ENCODE measurements at regions of chr7 and their contacts with region 1.

Region 1: GRCh38 chr7:66576646-66577045 is 52.0 kb upstream of the KCTD7 start:
- DNase-seq: no peak
- ATAC-seq: no peak
- H3K4me3 ChIP-seq: no peak overlapping the region
- H3K27ac ChIP-seq: no peak overlapping the region
- H3K4me1 ChIP-seq: peaks cover 4% of the 10 kb centered on the region
- H3K27me3 ChIP-seq: no peaks in the 10 kb centered on the region
- CTCF ChIP-seq: no peak
- POLR2A ChIP-seq: no peak
- RAD21 ChIP-seq: no peak

Region 2: GRCh38 chr7:66452165-66452564 is 124.5 kb before region 1 on chr7:
- CTCF ChIA-PET with region 1: no interaction called
- POLR2A ChIA-PET with region 1: no interaction called
- dilution Hi-C with region 1: no loop called
- in situ Hi-C with region 1: no loop called
- intact Hi-C with region 1: loop called (anchors 2 kb)
- DNase-seq: peak; percentile 30
- ATAC-seq: no peak
- H3K4me3 ChIP-seq: no peak overlapping the region
- H3K27ac ChIP-seq: no peak overlapping the region
- H3K4me1 ChIP-seq: peaks cover 4% of the 10 kb centered on the region; the same call in 1 of the 2 replicates
- H3K27me3 ChIP-seq: no peaks in the 10 kb centered on the region
- CTCF ChIP-seq: no peak
- POLR2A ChIP-seq: no peak
- RAD21 ChIP-seq: no peak

Region 3: GRCh38 chr7:66779669-66780409 is 203.2 kb after region 1 on chr7:
- CTCF ChIA-PET with region 1: no interaction called
- POLR2A ChIA-PET with region 1: no interaction called
- dilution Hi-C with region 1: no loop called
- in situ Hi-C with region 1: no loop called
- intact Hi-C with region 1: loop called (anchors 10 kb)
- DNase-seq: peak; percentile 56
- ATAC-seq: 0 out of 2 replicates have a peak, but pooled peaks have one; percentile 24
- H3K4me3 ChIP-seq: no peak overlapping the region
- H3K27ac ChIP-seq: peak overlapping the region; percentile 11; the same call in 1 of the 2 replicates
- H3K4me1 ChIP-seq: peaks cover 16% of the 10 kb centered on the region
- H3K27me3 ChIP-seq: no peaks in the 10 kb centered on the region
- CTCF ChIP-seq: no peak
- POLR2A ChIP-seq: no peak
- RAD21 ChIP-seq: no peak